Activated T-helper 2 cell treated with anti-CD3 and anti-CD28 coated beads, Interferon-gamma antibody, Interleukin-2, Interleukin-4, amounts not matched to agents 10 μg/mL and 5 μg/mL and 100 μg/mL, durations not matched to agents 14 hours and 24 hours and 36 hours (primary cell): ENCODE measurements at regions of chr7 and their contacts with region 1.

Region 1: DNA sequence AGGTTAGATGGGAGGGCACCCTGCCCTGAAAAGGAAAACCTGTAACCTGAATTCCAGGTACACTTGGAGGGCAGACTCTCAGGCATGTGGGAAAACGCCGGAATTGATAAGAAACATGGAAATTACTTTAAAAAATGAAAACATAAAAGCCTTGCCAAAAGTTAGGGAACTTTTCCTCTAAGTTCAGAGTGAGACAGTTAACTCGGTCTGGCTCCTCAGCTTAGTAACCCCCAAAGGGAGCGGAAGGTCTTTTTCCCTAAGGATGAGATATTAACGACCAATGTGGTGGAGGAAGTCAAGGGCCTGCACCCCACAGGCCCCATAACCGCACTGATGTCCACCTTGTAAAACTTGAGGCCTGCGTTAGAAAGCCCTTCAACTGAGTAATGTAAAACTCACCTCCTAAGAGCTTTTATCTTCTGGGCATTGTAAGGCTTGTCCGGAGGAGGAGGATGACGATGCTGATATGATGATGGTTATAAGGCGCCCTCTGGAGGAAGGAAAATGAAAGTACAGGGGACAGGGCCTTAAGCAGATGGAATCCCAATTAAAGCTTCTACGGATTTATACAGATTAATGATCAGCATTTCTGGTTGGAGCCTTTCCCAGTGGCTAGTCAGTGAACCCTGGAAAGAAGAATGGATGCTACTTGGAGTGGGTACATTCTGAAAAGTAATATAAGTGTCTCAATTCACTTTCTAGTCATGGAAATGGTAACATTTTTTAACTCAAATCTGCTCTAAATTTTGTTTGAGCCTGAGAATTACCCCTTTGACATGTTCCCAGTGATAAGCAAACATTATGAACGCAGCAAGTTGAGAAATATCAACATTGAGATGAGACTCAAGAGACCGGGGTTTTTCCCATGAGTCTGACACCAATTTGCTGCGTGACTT is 694 bp downstream of the COL1A2 start:
- DNase-seq: peak; percentile 35
- H3K4me3 Mint-ChIP-seq: peak overlapping the region; percentile 70
- H3K27ac Mint-ChIP-seq: no peak overlapping the region
- H3K4me1 Mint-ChIP-seq: peaks cover 23% of the 10 kb centered on the region
- H3K27me3 Mint-ChIP-seq: peaks cover 3% of the 10 kb centered on the region

Region 2: GRCh38 chr7:93245525-93246432 is 1149.6 kb before region 1 on chr7:
- intact Hi-C with region 1: loop called (anchors 10 kb)
- DNase-seq: no peak
- H3K4me3 Mint-ChIP-seq: no peak overlapping the region
- H3K27ac Mint-ChIP-seq: no peak overlapping the region
- H3K4me1 Mint-ChIP-seq: no peaks in the 10 kb centered on the region
- H3K27me3 Mint-ChIP-seq: no peaks in the 10 kb centered on the region

Region 3: GRCh38 chr7:94004024-94004951 is 391.1 kb before region 1 on chr7 and contains the start of gene BET1:
- intact Hi-C with region 1: loop called (anchors 5 kb)
- DNase-seq: peak; percentile 87
- H3K4me3 Mint-ChIP-seq: peak within 1 kb of the TSS; percentile 96
- H3K27ac Mint-ChIP-seq: peak within 1 kb of the TSS; percentile 94
- H3K4me1 Mint-ChIP-seq: peaks cover 24% of the 10 kb centered on the region
- H3K27me3 Mint-ChIP-seq: peaks cover 16% of the 10 kb centered on the region
- total RNA-seq, gene BET1: 19.4 and 22.3 TPM in 2 replicates

Region 4: DNA sequence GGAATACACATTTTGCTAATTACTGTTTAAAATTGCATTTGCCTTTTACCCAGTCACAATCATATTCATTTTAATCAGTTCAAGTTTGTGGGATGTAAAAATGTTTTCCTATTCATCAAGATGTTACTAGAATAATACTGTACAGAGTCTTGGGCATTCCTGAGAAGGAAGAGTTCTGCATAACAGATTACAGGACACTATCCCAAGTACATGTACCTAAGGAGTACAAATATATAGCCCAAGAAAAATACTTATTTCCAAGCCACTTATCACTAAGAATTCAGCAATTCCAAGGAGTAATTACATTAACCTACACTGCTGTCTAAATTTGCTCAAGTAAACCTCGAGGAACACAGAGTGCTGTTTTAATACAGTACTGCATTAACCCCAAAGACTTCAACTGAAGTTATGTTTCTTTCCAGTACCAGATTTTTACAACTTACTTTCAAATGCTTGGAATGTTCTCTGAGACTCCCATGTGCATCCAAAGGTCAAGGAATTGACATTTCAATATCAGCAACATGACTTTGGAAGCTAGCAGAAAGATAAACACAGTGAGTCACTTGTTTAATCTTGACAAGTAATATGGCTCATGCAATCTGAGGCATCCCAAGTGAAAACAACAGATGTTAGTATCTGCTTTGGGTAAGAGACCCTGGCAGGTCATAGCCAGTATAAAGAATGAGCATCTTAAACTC is 265.8 kb before region 1 on chr7:
- intact Hi-C with region 1: loop called (anchors 10 kb)
- DNase-seq: no peak
- H3K4me3 Mint-ChIP-seq: no peak overlapping the region
- H3K27ac Mint-ChIP-seq: no peak overlapping the region
- H3K4me1 Mint-ChIP-seq: no peaks in the 10 kb centered on the region
- H3K27me3 Mint-ChIP-seq: peaks cover 4% of the 10 kb centered on the region

Region 5: GRCh38 chr7:94294471-94295131 is 100.8 kb before region 1 on chr7:
- intact Hi-C with region 1: loop called (anchors 5 kb)
- DNase-seq: no peak
- H3K4me3 Mint-ChIP-seq: no peak overlapping the region
- H3K27ac Mint-ChIP-seq: no peak overlapping the region
- H3K4me1 Mint-ChIP-seq: no peaks in the 10 kb centered on the region
- H3K27me3 Mint-ChIP-seq: peaks cover 11% of the 10 kb centered on the region

Region 6: GRCh38 chr7:94348142-94348541 is 47.2 kb before region 1 on chr7:
- intact Hi-C with region 1: no loop called
- DNase-seq: no peak
- H3K4me3 Mint-ChIP-seq: no peak overlapping the region
- H3K27ac Mint-ChIP-seq: no peak overlapping the region
- H3K4me1 Mint-ChIP-seq: no peaks in the 10 kb centered on the region
- H3K27me3 Mint-ChIP-seq: no peaks in the 10 kb centered on the region